ENCODE measurements at regions of chr22 and their contacts with region 1.

Region 1: DNA sequence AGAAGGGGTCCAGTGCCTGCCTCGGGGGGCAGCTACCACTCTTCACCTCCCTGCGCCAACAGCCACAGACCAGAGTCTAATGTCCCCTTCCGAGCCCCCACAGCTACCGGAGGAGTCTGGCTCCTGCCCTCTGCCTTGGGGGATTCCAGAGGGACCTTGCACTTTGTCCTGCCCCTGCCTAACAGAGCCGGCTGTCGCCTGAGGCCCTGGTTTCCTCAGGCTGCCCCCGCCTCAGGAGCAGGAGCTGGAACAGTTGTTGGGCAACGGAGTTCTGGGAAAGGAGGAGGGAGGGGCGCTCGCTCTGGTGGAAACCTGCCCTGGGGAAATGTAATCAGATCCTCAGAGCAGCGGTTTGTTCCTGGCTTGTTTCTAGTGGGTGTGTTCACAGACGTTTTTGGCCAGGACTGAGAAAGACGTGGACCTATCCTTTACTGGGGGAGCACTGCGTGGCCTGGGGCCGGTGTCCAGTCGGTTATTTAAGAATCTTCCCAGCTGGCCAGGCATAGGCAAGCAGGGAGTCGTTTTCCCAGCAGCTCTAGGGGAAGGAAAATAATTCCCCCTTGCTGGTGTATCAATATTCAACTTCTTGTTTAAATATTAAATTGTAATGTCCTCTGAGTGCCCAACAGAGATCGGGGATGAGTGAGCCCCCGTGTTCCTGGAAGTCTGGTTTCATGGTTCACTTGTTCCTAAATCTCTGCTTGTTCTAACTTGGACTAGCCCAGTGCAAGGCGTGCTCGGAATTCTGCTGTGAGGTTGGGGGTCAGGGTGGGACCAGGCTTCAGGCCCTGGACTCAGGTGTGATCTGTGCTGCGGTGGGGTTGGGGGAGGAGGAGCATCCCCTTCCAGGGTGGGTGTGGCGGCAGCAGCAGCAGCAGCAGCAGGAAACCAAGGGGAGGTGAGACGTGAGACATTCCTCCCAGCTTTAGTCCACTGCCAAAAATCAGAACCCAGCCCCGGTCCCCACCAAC is 32.1 kb downstream of the A4GALT start:
- DNase-seq: peak; percentile 87 to 93
- H3K4me3 ChIP-seq: no peak overlapping the region
- H3K4me3 Mint-ChIP-seq: peak overlapping the region; percentile 70
- H3K27ac Mint-ChIP-seq: peak overlapping the region; percentile 87
- H3K4me1 ChIP-seq: peaks cover 46% of the 10 kb centered on the region
- H3K4me1 Mint-ChIP-seq: peaks cover 24% of the 10 kb centered on the region
- H3K27me3 ChIP-seq: no peaks in the 10 kb centered on the region
- H3K27me3 Mint-ChIP-seq: no peaks in the 10 kb centered on the region
- CTCF ChIP-seq: no peak

Region 2: DNA sequence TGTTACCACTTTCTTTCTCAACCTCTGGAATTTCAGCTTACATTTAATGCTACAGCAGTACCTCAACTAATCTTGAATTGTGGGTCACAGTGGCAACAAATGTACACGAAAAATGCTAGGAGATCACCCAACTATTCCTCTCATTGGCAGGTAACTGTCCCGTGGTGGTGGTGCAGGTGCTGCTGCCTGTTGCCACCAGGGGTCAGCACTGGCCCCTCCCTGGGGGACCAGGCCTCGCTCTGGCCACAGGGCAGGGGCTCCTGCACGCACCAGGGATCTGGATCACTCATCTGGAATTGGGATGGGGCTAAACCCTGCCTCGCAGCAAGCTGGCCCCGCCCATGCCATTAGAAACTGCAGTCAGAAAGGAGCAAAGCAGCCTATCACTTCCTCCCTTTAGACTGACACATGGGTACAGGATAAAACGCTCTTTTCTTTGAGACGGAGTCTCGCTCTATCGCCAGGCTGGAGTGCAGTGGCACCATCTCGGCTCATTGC is 67.0 kb before region 1 on chr22:
- CTCF ChIA-PET with region 1: no interaction called
- POLR2A ChIA-PET with region 1: no interaction called
- intact Hi-C with region 1: loop called (anchors 10 kb)
- DNase-seq: peak; percentile 73 to 85
- H3K4me3 ChIP-seq: no peak overlapping the region
- H3K4me3 Mint-ChIP-seq: no peak overlapping the region
- H3K27ac Mint-ChIP-seq: no peak overlapping the region
- H3K4me1 ChIP-seq: no peaks in the 10 kb centered on the region
- H3K4me1 Mint-ChIP-seq: no peaks in the 10 kb centered on the region
- H3K27me3 ChIP-seq: no peaks in the 10 kb centered on the region
- H3K27me3 Mint-ChIP-seq: no peaks in the 10 kb centered on the region
- CTCF ChIP-seq: peak; percentile 91 to 92

Region 3: DNA sequence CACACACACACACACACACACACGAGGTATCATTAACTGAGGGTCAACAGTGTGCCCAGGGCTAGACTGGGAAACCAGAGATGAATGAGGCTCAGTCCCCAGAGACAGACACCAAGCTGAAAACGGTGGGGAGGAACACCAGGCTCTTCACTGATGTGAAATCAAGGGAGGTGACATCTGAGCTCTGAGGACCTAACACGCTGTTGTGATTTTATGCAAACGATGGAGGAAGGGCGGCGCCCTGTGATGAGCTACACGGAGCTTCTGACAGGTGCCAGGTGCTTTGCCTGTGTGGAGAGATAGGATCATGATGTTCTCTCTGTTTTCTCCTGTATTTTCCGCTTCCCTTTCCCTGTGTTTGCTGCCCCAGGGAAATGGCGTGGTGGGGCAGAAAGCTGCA is 32.8 kb before region 1 on chr22:
- CTCF ChIA-PET with region 1: no interaction called
- POLR2A ChIA-PET with region 1: no interaction called
- intact Hi-C with region 1: loop called (anchors 2 kb)
- DNase-seq: no peak
- H3K4me3 ChIP-seq: no peak overlapping the region
- H3K4me3 Mint-ChIP-seq: no peak overlapping the region
- H3K27ac Mint-ChIP-seq: no peak overlapping the region
- H3K4me1 ChIP-seq: peaks cover 19% of the 10 kb centered on the region
- H3K4me1 Mint-ChIP-seq: peaks cover 24% of the 10 kb centered on the region
- H3K27me3 ChIP-seq: no peaks in the 10 kb centered on the region
- H3K27me3 Mint-ChIP-seq: no peaks in the 10 kb centered on the region
- CTCF ChIP-seq: no peak

Region 4: DNA sequence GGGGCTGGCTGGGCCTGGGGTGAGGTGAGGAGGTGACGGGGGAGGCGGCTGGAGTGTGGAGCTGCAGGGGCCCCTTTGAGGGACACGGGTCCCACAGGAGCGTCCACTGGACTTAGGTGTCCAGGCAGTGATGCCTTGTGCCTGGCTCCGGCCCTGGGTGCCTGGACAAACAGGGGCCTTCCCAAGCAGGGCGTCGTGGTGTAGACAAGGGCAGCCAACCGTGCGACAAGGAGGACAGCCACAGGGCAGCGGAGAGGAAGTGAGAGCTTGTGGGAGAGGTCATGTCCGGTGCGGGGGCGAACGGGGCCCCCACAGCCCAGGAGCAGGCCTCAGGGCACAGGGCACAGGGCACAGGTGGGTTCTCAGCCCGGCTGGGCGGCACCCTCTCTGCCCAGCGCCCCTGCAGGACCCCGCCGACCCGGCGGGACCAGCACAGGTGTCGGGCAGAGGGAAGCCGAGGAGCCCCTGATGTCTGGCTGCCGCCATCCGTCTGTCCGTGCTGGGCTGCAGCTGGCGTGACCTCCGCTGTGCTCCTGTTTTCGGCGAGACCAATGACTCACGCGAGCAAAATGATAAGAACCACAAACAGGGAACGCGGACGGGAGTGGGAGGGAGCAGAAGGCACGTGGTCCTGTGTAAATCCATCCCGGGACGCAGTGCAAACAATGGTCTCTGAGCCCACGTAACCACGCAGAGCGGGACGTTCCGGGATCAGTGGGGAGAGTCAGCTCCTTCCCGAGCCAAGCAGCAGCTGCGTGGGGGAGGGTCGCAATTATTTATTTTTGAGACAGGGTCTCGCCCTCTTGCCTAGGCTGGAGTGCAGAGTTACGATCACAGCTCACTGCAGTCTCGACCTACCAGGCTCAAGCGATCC is 81.3 kb after region 1 on chr22:
- CTCF ChIA-PET with region 1: interaction called, 3 read pairs
- POLR2A ChIA-PET with region 1: no interaction called
- intact Hi-C with region 1: loop called (anchors 10 kb)
- DNase-seq: peak; percentile 53 to 68
- H3K4me3 ChIP-seq: peak overlapping the region; percentile 22
- H3K4me3 Mint-ChIP-seq: peak overlapping the region; percentile 67
- H3K27ac Mint-ChIP-seq: peak overlapping the region; percentile 71
- H3K4me1 ChIP-seq: peaks cover 19% of the 10 kb centered on the region
- H3K4me1 Mint-ChIP-seq: peaks cover 14% of the 10 kb centered on the region
- H3K27me3 ChIP-seq: no peaks in the 10 kb centered on the region
- H3K27me3 Mint-ChIP-seq: no peaks in the 10 kb centered on the region
- CTCF ChIP-seq: no peak

Region 5: DNA sequence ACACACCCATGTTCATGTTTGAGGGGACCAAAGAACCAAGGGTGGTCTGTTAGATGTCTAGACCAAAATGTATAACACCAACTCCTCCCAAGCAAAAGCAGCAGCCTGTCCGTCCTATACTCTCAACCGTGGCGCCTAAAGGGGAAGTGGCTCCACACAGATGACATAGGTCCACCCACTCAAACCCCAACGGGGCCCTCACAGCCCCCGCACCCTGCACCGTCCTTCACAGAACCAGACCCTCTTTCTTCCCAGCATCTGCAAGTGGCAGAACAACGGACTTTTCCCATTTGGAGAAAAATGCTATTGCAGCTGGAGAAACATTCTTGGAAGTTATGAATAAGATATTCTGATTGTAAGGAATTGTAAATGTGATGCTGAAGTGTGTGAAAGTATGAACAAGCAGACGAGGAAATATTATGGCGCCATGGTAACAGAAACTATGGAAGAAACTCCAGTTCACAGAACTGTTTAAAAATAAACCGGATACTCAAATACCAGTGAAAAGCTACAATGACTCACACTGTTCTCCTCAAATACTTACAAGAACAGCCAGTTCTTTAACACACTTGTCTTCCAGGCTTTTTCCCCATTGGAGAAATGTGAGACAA is 245.1 kb after region 1 on chr22:
- CTCF ChIA-PET with region 1: no interaction called
- POLR2A ChIA-PET with region 1: no interaction called
- intact Hi-C with region 1: no loop called
- DNase-seq: no peak
- H3K4me3 ChIP-seq: no peak overlapping the region
- H3K4me3 Mint-ChIP-seq: no peak overlapping the region
- H3K27ac Mint-ChIP-seq: peak overlapping the region; percentile 66
- H3K4me1 ChIP-seq: peaks cover 30% of the 10 kb centered on the region
- H3K4me1 Mint-ChIP-seq: peaks cover 51% of the 10 kb centered on the region
- H3K27me3 ChIP-seq: no peaks in the 10 kb centered on the region
- H3K27me3 Mint-ChIP-seq: no peaks in the 10 kb centered on the region
- CTCF ChIP-seq: no peak

Measured in Caco-2 (cell line).